IMR-90 (cell line): ENCODE measurements at regions of chr9 and their contacts with region 1.

Region 1: DNA sequence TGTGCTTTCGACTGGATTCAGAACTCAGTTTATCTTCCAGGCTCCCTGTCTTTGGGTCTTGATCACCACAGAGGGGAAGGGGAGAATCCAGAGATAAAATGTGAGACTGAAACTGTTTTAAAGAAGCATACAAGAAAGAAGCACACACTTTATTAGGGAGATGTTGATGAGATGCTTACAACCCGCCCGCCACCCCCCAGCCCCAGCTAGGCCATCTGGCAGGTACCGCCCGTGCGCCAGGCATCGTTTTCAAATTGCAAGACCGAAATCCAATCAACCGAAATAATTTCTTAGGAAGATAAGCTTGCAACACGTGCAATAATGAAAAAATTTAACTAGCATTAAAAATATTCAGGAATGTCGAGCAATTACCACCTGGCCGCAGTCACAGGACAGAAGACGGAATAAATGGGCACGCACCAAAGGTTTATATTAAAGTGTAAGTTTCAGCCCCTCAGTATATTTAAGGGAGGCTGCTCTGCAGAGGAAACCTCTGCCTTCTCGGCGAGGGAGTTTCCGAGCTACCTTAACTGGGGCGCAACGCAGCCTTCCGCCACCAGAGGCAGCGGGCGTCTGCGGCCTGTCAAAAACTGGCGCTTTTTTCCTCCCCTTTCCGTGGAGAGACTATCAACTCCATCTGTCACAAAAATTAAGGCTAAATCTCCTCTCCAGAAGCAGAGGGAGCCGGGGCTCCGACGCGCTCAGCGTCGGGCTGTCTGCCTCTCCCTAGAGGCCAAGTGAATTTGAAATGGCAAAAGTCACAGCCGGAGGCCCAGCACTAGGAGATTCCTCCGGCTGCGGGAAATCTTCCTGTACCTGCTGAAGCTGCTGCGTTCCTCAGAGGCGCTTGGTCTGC is 996 bp upstream of the GAS1 start:
- DNase-seq: peak; percentile 82
- ATAC-seq: peak; percentile 38
- H3K4me3 ChIP-seq: peak overlapping the region; percentile 42
- H3K27ac ChIP-seq: peak overlapping the region; percentile 63
- H3K4me1 ChIP-seq: no peaks in the 10 kb centered on the region; the same call in 1 of the 2 replicates
- H3K27me3 ChIP-seq: no peaks in the 10 kb centered on the region; the same call in 1 of the 2 replicates
- CTCF ChIP-seq: peak; percentile 84
- POLR2A ChIP-seq: no peak
- RAD21 ChIP-seq: peak; percentile 78

Region 2: DNA sequence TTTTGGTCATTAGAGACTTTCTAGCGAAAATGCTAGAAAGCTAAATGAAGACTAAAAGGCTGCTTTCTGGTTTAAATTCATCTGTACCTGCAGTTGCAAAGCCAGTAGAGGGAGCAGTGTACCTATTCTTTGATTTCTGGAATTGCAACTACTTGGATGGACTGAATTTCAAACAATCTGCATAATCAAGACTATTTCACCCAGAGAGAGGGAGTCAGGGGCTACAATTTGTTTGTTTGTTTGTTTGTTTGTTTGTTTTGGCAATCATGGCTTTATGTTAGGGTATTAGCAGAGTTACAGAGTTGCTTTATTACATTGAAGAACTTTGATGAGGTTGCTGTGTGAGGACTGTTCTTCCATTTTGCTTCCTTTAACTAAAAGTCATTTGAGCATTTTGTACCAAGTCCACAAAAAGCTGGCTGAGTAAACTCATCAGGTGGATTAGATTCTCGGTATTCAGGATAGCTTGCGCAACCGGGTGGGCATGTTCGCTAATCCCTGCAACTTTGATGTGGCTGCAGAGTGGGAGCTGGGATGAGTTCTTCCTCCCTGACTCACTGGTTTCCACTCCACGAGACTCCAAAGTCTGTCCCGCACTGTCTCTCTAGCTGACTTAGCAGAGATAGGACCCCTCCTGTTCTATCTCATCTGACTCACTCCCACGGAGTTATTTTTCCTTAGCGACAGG is 514.1 kb before region 1 on chr9:
- CTCF ChIA-PET with region 1: interaction called, 3 read pairs
- POLR2A ChIA-PET with region 1: no interaction called
- dilution Hi-C with region 1: no loop called
- in situ Hi-C with region 1: no loop called
- intact Hi-C with region 1: loop called (anchors 1 kb)
- DNase-seq: peak; percentile 79
- ATAC-seq: peak; percentile 93
- H3K4me3 ChIP-seq: no peak overlapping the region; the same call in 1 of the 2 replicates
- H3K27ac ChIP-seq: peak overlapping the region; percentile 21; the same call in 1 of the 2 replicates
- H3K4me1 ChIP-seq: no peaks in the 10 kb centered on the region
- H3K27me3 ChIP-seq: no peaks in the 10 kb centered on the region
- CTCF ChIP-seq: peak; percentile 89
- POLR2A ChIP-seq: no peak
- RAD21 ChIP-seq: peak; percentile 84

Region 3: DNA sequence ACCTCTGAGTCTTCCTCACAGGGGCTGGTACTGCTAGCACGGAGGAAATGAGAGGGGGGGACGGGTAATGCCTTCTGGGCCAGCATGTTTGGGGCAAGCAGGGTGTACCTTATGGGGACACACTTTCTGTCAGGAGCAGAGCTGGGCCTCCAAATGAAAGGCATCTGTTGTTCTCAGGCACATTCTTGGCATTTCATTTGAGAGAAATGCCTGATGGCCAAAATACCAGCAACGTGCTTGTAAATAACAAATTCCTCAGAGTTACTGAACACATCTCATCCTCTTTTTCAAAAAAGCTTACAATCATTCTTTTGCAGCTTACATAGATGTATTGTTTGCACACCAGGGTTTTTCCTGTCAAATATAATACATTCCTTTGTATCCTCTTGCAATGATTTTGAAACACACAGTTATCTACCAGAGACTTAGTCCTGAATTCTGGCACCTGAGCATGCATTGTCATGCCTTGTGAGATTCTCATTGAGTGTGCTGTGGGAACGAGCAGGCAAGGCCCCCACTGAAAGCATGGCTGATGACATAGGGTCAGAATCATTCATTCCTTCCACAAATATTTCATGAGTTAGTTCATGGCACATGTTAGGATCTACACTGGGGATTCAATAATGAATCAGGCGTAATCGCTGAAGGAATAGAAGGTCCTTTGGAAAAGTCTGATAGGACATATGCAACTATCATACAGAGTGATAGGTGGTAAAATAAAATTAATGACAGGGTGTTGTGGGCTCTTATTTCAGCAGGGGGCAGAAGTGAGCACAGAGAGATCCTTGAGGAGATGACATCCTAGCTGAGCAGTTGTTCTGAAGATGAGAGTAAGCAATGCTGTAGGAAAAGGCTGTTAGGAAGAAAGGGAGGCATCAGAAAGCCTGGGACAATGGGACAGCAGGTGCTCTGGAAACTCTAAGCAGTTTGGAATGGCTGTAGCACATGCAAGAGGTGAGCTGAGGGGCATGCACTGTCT is 333.1 kb before region 1 on chr9:
- CTCF ChIA-PET with region 1: no interaction called
- POLR2A ChIA-PET with region 1: no interaction called
- dilution Hi-C with region 1: no loop called
- in situ Hi-C with region 1: no loop called
- intact Hi-C with region 1: loop called (anchors 1 kb)
- DNase-seq: peak; percentile 70
- ATAC-seq: peak; percentile 74
- H3K4me3 ChIP-seq: no peak overlapping the region
- H3K27ac ChIP-seq: peak overlapping the region; percentile 80; the same call in 1 of the 2 replicates
- H3K4me1 ChIP-seq: peaks cover 8% of the 10 kb centered on the region
- H3K27me3 ChIP-seq: no peaks in the 10 kb centered on the region
- CTCF ChIP-seq: peak; percentile 46
- POLR2A ChIP-seq: no peak
- RAD21 ChIP-seq: peak; percentile 50

Region 4: DNA sequence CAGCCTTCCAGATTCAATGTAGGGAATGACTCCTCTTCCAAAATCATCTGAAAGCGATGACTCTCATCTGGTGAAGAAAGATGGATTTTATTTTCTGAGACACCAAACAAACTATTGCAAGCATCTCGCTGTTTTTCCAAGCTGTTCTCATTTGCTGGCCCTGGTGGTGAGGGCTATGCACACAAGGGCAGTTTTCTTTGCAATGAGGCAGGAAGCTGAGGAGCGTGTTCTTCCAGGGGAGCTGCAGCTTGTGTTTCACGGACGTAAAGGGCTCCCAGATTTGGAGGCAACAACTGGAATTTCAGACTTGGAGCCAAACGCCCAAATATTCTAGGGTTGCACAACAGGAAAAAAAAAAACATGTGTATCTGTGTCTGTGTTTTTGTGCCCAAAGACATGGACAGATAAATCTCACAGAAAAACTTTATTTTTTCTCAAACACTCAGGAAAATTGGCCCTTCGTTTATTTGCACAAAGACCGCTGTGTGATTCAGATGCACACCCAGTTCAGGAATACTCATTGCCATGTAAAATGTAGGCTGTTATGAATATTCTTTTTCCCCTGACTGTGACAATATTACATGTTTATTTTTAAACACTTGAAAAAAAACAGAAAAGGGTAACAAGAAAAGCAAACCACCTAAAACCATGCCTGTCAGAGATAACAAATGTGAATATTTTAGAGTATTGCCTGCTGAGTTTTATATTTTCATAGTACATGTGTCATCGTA is 152.3 kb before region 1 on chr9:
- CTCF ChIA-PET with region 1: no interaction called
- POLR2A ChIA-PET with region 1: no interaction called
- dilution Hi-C with region 1: no loop called
- in situ Hi-C with region 1: no loop called
- intact Hi-C with region 1: loop called (anchors 1 kb)
- DNase-seq: peak; percentile 83
- ATAC-seq: peak; percentile 83
- H3K4me3 ChIP-seq: no peak overlapping the region
- H3K27ac ChIP-seq: peak overlapping the region; percentile 16; the same call in 1 of the 2 replicates
- H3K4me1 ChIP-seq: peaks cover 9% of the 10 kb centered on the region
- H3K27me3 ChIP-seq: no peaks in the 10 kb centered on the region
- CTCF ChIP-seq: peak; percentile 24; the same call in 1 of the 2 replicates
- POLR2A ChIP-seq: no peak
- RAD21 ChIP-seq: 0 out of 2 replicates have a peak, but pooled peaks have one; percentile 19

Region 5: DNA sequence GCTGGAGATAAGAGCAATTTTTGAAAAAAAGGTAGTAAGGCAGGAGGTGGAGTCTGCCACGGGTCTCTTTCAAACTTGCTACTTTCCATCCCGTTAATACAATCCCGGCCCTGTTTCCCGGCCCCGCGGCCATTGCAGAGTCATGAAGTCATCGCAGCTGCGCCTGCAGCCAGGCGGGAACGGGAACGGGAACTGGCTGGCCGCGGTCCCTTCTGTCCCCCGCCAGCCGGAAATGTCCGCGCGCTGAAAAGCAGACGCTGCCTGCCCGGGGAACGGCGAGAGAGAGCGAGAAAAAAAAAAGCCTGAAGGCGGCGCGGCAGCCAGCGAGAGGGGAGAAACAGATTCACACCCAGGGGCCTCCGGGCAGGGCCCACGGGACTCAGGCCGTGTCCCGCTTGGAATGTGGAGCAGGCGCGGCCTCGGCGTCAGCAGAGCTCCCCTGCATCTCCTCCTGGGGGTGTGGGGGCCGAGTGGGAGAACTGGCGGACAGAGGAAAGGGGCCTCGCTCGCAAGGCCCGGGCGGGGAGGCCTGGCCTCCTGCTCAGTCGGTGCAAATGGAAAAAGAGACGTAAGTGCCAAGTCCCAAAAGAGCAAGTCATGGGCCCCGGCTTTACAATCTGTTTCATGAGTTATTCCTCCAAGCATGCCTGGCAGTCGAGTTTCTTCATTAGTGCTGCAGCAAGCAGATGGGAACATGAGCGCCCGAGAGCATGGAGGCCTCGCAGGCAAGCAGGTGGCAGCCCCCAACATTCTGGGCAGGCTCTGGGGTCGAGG is 200.2 kb after region 1 on chr9:
- CTCF ChIA-PET with region 1: no interaction called
- POLR2A ChIA-PET with region 1: no interaction called
- dilution Hi-C with region 1: no loop called
- in situ Hi-C with region 1: no loop called
- intact Hi-C with region 1: loop called (anchors 1 kb)
- DNase-seq: peak; percentile 75
- ATAC-seq: peak; percentile 89
- H3K4me3 ChIP-seq: peak overlapping the region; percentile 5; the same call in 1 of the 2 replicates
- H3K27ac ChIP-seq: peak overlapping the region; percentile 82
- H3K4me1 ChIP-seq: peaks cover 12% of the 10 kb centered on the region
- H3K27me3 ChIP-seq: no peaks in the 10 kb centered on the region
- CTCF ChIP-seq: 0 out of 2 replicates have a peak, but pooled peaks have one; percentile 9
- POLR2A ChIP-seq: peak; percentile 25; the same call in 1 of the 2 replicates
- RAD21 ChIP-seq: peak; percentile 29; the same call in 1 of the 2 replicates

Region 6: GRCh38 chr9:87290241-87291052 is 342.1 kb after region 1 on chr9:
- CTCF ChIA-PET with region 1: no interaction called
- POLR2A ChIA-PET with region 1: no interaction called
- dilution Hi-C with region 1: no loop called
- in situ Hi-C with region 1: no loop called
- intact Hi-C with region 1: loop called (anchors 1 kb)
- DNase-seq: peak; percentile 83
- ATAC-seq: peak; percentile 76
- H3K4me3 ChIP-seq: no peak overlapping the region
- H3K27ac ChIP-seq: peak overlapping the region; percentile 74
- H3K4me1 ChIP-seq: peaks cover 8% of the 10 kb centered on the region
- H3K27me3 ChIP-seq: no peaks in the 10 kb centered on the region
- CTCF ChIP-seq: peak; percentile 41; the same call in 1 of the 2 replicates
- POLR2A ChIP-seq: no peak
- RAD21 ChIP-seq: peak; percentile 43